PC-9 (cell line): ENCODE measurements at regions of chr9 and their contacts with region 1.

Region 1: DNA sequence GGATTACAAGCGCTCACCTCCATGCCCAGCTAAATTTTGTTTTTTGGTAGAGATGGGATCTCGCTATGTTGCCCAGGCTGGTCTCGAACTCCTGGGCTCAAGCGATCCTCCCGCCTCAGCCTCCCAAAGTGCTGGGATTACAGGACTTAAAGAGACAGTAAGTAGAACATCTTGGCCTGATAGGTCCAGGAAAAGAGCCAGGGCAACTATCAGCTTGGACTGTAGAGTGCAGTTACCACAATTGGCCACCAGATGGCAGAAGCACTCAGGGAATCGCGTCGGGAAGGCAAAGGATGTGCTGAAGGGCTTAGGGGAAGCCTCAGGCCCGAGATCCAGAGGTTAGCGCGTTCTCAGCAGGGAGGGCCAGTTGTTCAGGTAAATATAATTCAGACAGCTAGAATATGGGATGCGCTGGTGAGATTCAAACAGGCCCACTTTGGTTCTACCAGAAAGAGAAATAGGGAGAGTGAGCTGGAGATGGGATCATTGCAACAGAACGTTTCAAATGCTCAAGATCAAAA is 21.5 kb downstream of the C9orf57 start:
- DNase-seq: peak; percentile 46 to 82
- H3K4me3 ChIP-seq: no peak overlapping the region
- H3K27ac ChIP-seq: no peak overlapping the region
- H3K4me1 ChIP-seq: 0 out of 2 replicates have a peak, but pooled peaks cover 6% of the 10 kb centered on the region
- H3K27me3 ChIP-seq: no peaks in the 10 kb centered on the region
- CTCF ChIP-seq: peak; percentile 97

Region 2: GRCh38 chr9:72154468-72155281 is 115.7 kb after region 1 on chr9:
- CTCF ChIA-PET with region 1: interaction called, 3 read pairs
- POLR2A ChIA-PET with region 1: interaction called, 13 read pairs
- intact Hi-C with region 1: loop called (anchors 1 kb)
- DNase-seq: peak in 1 of 2 experiments; percentile 80
- H3K4me3 ChIP-seq: no peak overlapping the region
- H3K27ac ChIP-seq: peak overlapping the region; percentile 58
- H3K4me1 ChIP-seq: peaks cover 45% of the 10 kb centered on the region
- H3K27me3 ChIP-seq: no peaks in the 10 kb centered on the region
- CTCF ChIP-seq: no peak

Region 3: GRCh38 chr9:72203205-72203803 is 164.4 kb after region 1 on chr9:
- CTCF ChIA-PET with region 1: no interaction called
- POLR2A ChIA-PET with region 1: no interaction called
- intact Hi-C with region 1: loop called (anchors 5 kb)
- DNase-seq: peak in 1 of 2 experiments; percentile 15
- H3K4me3 ChIP-seq: no peak overlapping the region
- H3K27ac ChIP-seq: no peak overlapping the region
- H3K4me1 ChIP-seq: no peaks in the 10 kb centered on the region
- H3K27me3 ChIP-seq: no peaks in the 10 kb centered on the region
- CTCF ChIP-seq: peak; percentile 65

Region 4: DNA sequence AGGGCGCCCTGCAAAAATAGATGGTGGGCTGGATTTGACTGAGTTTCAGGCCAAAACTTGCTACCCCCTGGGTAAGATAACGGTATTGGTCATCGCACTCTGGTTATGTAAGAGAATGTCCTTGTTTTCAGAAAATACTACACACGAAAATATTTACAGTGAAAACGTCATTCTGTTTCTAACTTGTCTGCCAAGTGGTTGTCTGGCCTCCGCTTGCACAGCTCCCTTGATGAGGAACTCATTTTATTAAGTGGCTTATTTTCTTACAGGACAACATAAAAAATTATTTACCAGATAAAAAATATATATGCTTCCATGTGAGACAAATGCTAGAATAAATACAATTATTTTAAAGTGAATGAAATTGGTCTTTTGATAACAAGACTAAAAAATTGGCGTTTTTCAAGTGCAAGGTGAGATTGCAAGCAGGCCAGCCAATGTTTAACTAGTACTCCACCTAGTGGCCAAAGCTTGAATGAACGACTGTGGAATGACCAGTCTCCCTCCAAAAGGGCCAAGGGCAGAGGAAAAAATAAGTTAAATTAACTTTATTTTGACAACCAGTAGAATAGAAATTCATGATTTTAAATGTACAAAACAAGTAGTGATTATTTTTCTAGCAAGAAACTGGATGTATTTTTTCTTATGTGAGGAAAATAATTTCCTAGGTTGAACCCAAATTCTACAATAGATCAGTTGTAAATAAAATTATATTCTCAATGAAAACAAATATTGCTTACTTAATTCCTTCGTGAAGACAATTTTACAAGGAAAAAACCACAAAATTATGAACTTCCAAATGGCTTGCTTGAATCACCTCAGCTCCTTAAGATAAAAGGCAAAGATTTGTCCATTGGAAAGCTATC is 232.9 kb after region 1 on chr9:
- CTCF ChIA-PET with region 1: interaction called, 18 read pairs
- POLR2A ChIA-PET with region 1: no interaction called
- intact Hi-C with region 1: loop called (anchors 1 kb)
- DNase-seq: peak in 1 of 2 experiments; percentile 49
- H3K4me3 ChIP-seq: no peak overlapping the region
- H3K27ac ChIP-seq: no peak overlapping the region
- H3K4me1 ChIP-seq: no peaks in the 10 kb centered on the region
- H3K27me3 ChIP-seq: no peaks in the 10 kb centered on the region
- CTCF ChIP-seq: peak; percentile 92

Region 5: GRCh38 chr9:72478966-72479365 is 440.0 kb after region 1 on chr9:
- CTCF ChIA-PET with region 1: no interaction called
- POLR2A ChIA-PET with region 1: no interaction called
- intact Hi-C with region 1: loop called (anchors 1 kb)
- DNase-seq: no peak
- H3K4me3 ChIP-seq: no peak overlapping the region
- H3K27ac ChIP-seq: peak overlapping the region; percentile 94
- H3K4me1 ChIP-seq: peaks cover 47% of the 10 kb centered on the region
- H3K27me3 ChIP-seq: no peaks in the 10 kb centered on the region
- CTCF ChIP-seq: no peak